GM12878 (cell line): ENCODE measurements at regions of chr14 and their contacts with region 1.

Region 1: GRCh38 chr14:94136575-94137331 is 7.3 kb upstream of the IFI27L2 start:
- DNase-seq: no peak
- ATAC-seq: peak; percentile 96
- H3K4me3 ChIP-seq: no peak overlapping the region
- H3K27ac ChIP-seq: no peak overlapping the region
- H3K4me1 ChIP-seq: no peaks in the 10 kb centered on the region
- H3K27me3 ChIP-seq: no peaks in the 10 kb centered on the region; a peak in 1 of 4 replicates
- CTCF ChIP-seq: peak; percentile 96 to 99 (median 98)
- EP300 ChIP-seq: no peak
- POLR2A ChIP-seq: no peak
- RAD21 ChIP-seq: peak; percentile 96

Region 2: DNA sequence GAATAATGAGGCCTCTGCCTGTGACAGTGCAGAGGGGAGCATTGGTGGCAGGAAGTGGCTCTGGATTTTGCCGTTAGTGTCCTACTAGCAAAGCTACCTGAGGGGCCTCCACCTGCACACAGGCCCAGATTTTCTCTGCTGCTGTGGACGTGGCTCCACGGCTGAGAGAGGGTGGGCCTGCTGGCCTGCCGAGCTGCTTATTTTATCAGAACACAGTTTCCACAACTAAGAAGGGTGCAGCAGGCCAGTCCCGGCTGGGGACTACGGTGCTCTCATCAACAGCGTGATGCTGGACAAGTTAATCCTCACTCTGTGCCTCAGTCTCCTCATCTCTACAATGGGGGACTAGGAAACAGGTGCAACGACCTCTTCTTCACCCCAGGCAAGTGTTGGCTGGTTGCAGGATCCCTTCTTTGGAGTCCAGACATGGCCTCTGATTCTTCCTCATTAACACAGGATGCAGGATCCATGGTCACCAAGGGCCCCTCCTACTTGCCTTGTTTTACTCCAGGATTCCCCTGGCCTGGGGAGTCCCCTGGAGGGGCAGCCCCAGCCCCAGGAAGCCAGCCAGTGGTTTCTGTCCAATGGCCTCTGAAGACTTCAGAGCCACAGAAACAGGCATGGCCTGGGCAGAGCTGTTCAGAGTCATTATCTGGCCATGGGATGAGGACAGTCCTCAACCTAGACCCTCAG is 206.3 kb before region 1 on chr14:
- CTCF ChIA-PET with region 1: interaction called, 14 read pairs
- POLR2A ChIA-PET with region 1: no interaction called
- RAD21 ChIA-PET with region 1: interaction called, 6 read pairs
- SMC1A ChIA-PET with region 1: no interaction called
- in situ Hi-C with region 1: loop called (anchors 5 kb)
- intact Hi-C with region 1: no loop called
- DNase-seq: no peak
- ATAC-seq: peak; percentile 60
- H3K4me3 ChIP-seq: no peak overlapping the region
- H3K27ac ChIP-seq: no peak overlapping the region
- H3K4me1 ChIP-seq: no peaks in the 10 kb centered on the region
- H3K27me3 ChIP-seq: no peaks in the 10 kb centered on the region
- CTCF ChIP-seq: no peak
- EP300 ChIP-seq: no peak
- POLR2A ChIP-seq: no peak
- RAD21 ChIP-seq: no peak

Region 3: GRCh38 chr14:94009767-94010166 is 127.0 kb before region 1 on chr14:
- CTCF ChIA-PET with region 1: interaction called, 12 read pairs
- POLR2A ChIA-PET with region 1: no interaction called
- RAD21 ChIA-PET with region 1: interaction called, 7 read pairs
- SMC1A ChIA-PET with region 1: interaction called, 7 read pairs
- in situ Hi-C with region 1: no loop called
- intact Hi-C with region 1: no loop called
- DNase-seq: peak; percentile 25
- ATAC-seq: peak; percentile 86
- H3K4me3 ChIP-seq: no peak overlapping the region; the same call in 1 of the 2 replicates
- H3K27ac ChIP-seq: peak overlapping the region; percentile 20; the same call in 1 of the 2 replicates
- H3K4me1 ChIP-seq: peaks cover 36% of the 10 kb centered on the region
- H3K27me3 ChIP-seq: no peaks in the 10 kb centered on the region
- CTCF ChIP-seq: no peak
- EP300 ChIP-seq: peak; percentile 10 to 57; a peak in 1 of 4 replicates
- POLR2A ChIP-seq: no peak
- RAD21 ChIP-seq: no peak

Region 4: GRCh38 chr14:94051115-94051514 is 85.6 kb before region 1 on chr14:
- CTCF ChIA-PET with region 1: interaction called, 35 read pairs
- POLR2A ChIA-PET with region 1: no interaction called
- RAD21 ChIA-PET with region 1: interaction called, 5 read pairs
- SMC1A ChIA-PET with region 1: interaction called, 5 read pairs
- in situ Hi-C with region 1: no loop called
- intact Hi-C with region 1: no loop called
- DNase-seq: no peak
- ATAC-seq: no peak
- H3K4me3 ChIP-seq: no peak overlapping the region
- H3K27ac ChIP-seq: no peak overlapping the region
- H3K4me1 ChIP-seq: no peaks in the 10 kb centered on the region
- H3K27me3 ChIP-seq: no peaks in the 10 kb centered on the region
- CTCF ChIP-seq: no peak; a peak in 1 of 6 replicates
- EP300 ChIP-seq: no peak
- POLR2A ChIP-seq: no peak
- RAD21 ChIP-seq: no peak

Region 5: GRCh38 chr14:94080471-94081289 is 56.1 kb before region 1 on chr14 and contains the start of gene DDX24:
- CTCF ChIA-PET with region 1: interaction called, 16 read pairs
- POLR2A ChIA-PET with region 1: no interaction called
- RAD21 ChIA-PET with region 1: no interaction called
- SMC1A ChIA-PET with region 1: interaction called, 10 read pairs
- in situ Hi-C with region 1: no loop called
- intact Hi-C with region 1: no loop called
- DNase-seq: peak; percentile 85
- ATAC-seq: peak; percentile 96
- H3K4me3 ChIP-seq: peak within 1 kb of the TSS; percentile 72
- H3K27ac ChIP-seq: peak within 1 kb of the TSS; percentile 96
- H3K4me1 ChIP-seq: peaks cover 3% of the 10 kb centered on the region
- H3K27me3 ChIP-seq: no peaks in the 10 kb centered on the region
- CTCF ChIP-seq: no peak
- EP300 ChIP-seq: no peak
- POLR2A ChIP-seq: peak; percentile 98
- RAD21 ChIP-seq: no peak
- polyA plus RNA-seq, gene DDX24: 137 to 176 TPM

Region 6: DNA sequence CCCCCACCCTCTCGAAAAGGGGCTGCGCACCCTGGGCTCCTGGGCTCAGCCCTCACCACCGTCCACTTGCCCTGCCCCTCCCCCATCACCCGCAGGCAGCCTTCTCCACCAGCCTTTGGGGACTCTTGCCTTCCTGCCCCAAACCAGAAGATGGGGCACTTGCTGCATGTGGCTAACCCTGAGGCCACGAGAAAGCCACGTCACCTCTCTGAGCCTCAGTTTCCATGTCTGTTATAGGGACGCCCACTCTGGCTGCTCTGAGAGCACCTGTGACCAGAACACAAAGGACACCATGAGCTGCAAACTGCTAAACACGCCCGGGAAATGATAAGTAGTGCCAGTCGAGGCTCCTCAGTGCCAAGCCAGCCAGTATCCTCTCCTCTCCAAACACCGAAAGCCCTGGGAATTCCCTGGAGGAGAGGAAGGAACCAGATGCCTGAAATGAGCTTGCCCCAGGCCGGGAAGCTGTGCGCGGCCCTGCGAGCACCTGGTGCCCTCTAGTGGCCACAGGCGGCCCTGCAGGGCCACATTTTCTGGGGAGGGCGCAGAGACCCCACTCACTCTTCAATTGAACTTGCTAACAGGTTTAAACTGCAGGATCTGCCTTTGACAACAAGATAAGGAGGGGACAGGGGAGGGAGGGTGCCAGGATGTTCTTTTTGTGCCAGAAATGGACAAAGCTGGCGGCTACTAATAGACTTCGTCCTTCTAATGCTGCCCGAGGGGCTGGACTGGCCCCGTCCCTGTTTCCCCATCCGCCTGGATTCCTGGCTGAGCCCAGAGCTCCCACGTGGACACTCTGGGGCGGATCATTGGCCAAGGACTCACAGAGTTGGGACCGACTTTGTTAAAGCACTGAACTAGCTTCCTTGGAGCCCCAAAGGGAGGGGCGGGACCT is 349.4 kb after region 1 on chr14:
- CTCF ChIA-PET with region 1: interaction called, 4 read pairs
- POLR2A ChIA-PET with region 1: no interaction called
- RAD21 ChIA-PET with region 1: interaction called, 3 read pairs
- SMC1A ChIA-PET with region 1: no interaction called
- in situ Hi-C with region 1: no loop called
- intact Hi-C with region 1: loop called (anchors 10 kb)
- DNase-seq: no peak
- ATAC-seq: peak; percentile 64
- H3K4me3 ChIP-seq: no peak overlapping the region
- H3K27ac ChIP-seq: no peak overlapping the region
- H3K4me1 ChIP-seq: peaks cover 10% of the 10 kb centered on the region
- H3K27me3 ChIP-seq: peaks cover 0 to 2% of the 10 kb centered on the region in 2 experiments; a peak in 1 of 4 replicates
- CTCF ChIP-seq: peak; percentile 98 to 99 (median 99); a peak in 5 of 6 replicates
- EP300 ChIP-seq: no peak
- POLR2A ChIP-seq: no peak
- RAD21 ChIP-seq: peak; percentile 80